Mammary epithelial cell (primary cell): ENCODE measurements at regions of chr15 and their contacts with region 1.

Region 1: GRCh38 chr15:91535856-91536500 is 317.5 kb upstream of the SLCO3A1 start:
- DNase-seq: peak; percentile 43
- H3K4me3 ChIP-seq: no peak overlapping the region
- H3K27ac ChIP-seq: no peak overlapping the region
- H3K4me1 ChIP-seq: peaks cover 10% of the 10 kb centered on the region
- H3K27me3 ChIP-seq: no peaks in the 10 kb centered on the region
- CTCF ChIP-seq: no peak

Region 2: DNA sequence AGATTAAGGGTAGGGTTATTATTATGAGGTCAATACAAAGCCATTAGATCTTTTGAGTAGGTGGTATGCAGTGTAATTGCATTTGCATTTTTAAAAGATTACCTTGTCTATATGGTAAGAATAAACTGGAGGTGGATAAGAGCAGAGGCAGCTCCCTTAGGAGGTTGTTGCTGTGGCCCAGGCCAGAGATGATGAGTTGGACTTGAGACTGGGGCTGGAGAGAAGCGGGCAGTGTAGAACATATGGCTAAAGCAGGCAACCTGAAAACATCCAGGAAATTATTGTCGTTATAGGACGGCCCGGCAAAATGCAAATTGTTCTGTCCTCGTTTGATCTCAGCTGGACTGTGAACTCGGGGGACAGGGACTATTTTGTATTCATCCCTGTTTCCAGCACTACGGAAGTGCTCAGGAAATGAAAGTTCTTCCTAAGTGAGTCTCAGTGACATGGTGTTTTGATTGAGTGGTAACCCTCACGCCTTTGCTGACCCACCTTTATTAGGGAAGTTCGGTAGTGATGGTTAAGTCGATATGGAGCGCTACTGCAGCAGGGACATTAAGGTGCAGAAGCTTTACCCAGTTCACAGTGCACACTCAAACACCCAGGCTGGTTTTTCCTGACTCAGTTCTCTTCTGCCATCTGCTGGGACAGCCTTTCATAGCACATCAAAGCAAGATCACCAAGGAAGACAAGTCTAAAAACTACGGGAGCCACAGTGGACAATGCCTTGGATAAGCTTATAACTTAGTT is 486.4 kb before region 1 on chr15:
- CTCF ChIA-PET with region 1: no interaction called
- dilution Hi-C with region 1: no loop called
- in situ Hi-C with region 1: loop called in 1 of 2 experiments (anchors 25 kb)
- intact Hi-C with region 1: no loop called
- DNase-seq: peak; percentile 58
- H3K4me3 ChIP-seq: no peak overlapping the region
- H3K27ac ChIP-seq: no peak overlapping the region
- H3K4me1 ChIP-seq: no peaks in the 10 kb centered on the region
- H3K27me3 ChIP-seq: peaks cover 2% of the 10 kb centered on the region
- CTCF ChIP-seq: peak; percentile 52 to 76

Region 3: DNA sequence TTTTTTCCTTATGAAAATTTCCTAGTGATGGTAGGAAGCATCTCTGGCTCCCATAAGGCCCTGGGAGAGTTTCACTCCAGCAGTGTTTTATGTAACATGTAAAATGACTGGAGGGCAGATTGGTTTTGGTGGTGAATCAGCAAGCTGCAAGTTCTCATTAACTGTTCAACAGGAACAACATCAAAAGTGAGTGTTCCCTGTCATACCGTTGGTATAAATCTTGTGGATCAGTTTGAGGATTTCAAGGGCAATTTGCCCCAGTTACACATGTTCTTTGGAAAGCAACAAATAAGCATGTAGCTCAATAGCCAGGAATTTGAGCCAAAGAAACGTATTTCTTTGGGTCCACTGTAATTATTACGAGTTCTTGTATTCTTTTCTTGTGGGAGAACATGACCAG is 90.2 kb before region 1 on chr15:
- CTCF ChIA-PET with region 1: no interaction called
- dilution Hi-C with region 1: no loop called
- in situ Hi-C with region 1: no loop called
- intact Hi-C with region 1: no loop called
- DNase-seq: peak; percentile 94
- H3K4me3 ChIP-seq: no peak overlapping the region
- H3K27ac ChIP-seq: peak overlapping the region; percentile 34
- H3K4me1 ChIP-seq: peaks cover 13% of the 10 kb centered on the region
- H3K27me3 ChIP-seq: no peaks in the 10 kb centered on the region
- CTCF ChIP-seq: no peak

Region 4: GRCh38 chr15:91611561-91612323 is 75.8 kb after region 1 on chr15:
- CTCF ChIA-PET with region 1: no interaction called
- dilution Hi-C with region 1: no loop called
- in situ Hi-C with region 1: no loop called
- intact Hi-C with region 1: no loop called
- DNase-seq: no peak
- H3K4me3 ChIP-seq: no peak overlapping the region
- H3K27ac ChIP-seq: no peak overlapping the region
- H3K4me1 ChIP-seq: no peaks in the 10 kb centered on the region
- H3K27me3 ChIP-seq: no peaks in the 10 kb centered on the region
- CTCF ChIP-seq: no peak